Ascending aorta (tissue), 2 donors: ENCODE measurements at regions of chr4 and their contacts with region 1.

Region 1: GRCh38 chr4:107600436-107600835 is 119.6 kb downstream of the PAPSS1 start:
- DNase-seq: no peak
- H3K4me3 ChIP-seq: no peak overlapping the region
- H3K27ac ChIP-seq: peak overlapping the region; percentile 57 to 64
- H3K4me1 ChIP-seq: peaks cover 0 to 7% of the 10 kb centered on the region in 2 donors
- H3K27me3 ChIP-seq: no peaks in the 10 kb centered on the region
- CTCF ChIP-seq: no peak

Region 2: GRCh38 chr4:107619066-107619465 is 18.6 kb after region 1 on chr4:
- intact Hi-C with region 1: loop called (anchors 2 kb)
- DNase-seq: no peak
- H3K4me3 ChIP-seq: no peak overlapping the region
- H3K27ac ChIP-seq: peak overlapping the region; percentile 57 to 73
- H3K4me1 ChIP-seq: peaks cover 0 to 8% of the 10 kb centered on the region in 2 donors
- H3K27me3 ChIP-seq: no peaks in the 10 kb centered on the region
- CTCF ChIP-seq: no peak